PC-9 (cell line): ENCODE measurements at regions of chr1 and their contacts with region 1.

Region 1: DNA sequence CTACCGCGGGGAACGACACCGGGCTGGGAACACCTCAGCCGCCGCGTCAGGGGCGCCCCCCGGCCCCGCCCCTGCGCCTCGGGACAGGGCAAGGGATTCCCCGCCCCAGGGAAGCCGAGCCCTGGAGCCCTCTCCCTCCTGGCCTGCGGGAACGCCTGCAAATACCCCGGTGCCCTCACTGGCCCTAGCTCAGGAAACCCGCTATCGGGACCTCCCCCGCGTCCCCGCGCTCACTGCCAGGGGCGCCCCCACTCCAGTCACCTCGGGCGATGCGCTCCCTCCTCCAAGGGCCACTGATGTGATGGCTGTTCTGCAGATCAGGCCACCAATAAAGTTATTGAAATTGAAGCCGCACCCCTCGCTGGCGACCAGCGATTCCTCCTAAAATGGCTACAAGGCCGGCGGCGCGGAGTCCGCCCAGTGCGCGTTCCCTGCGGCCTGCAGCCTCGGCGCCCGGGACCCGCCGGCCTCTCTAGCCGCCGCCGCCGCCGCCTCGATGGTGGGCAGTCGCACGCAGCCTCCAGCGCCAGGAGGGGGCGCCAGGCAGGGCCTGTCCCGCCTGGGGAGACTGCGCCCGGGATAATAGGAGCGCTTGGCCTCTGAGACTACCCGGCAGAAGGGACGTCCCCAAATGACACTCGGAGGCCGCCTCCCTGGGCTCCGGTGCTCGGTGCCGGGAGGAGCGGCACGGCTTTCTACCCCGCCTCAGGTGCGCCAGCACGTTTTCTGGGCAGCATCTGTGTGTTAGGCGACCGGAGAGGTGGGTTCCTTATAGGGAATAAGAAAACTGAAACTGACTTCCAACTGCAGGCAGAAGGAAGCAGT is at the start of gene PRKAB2:
- DNase-seq: peak; percentile 81 to 96
- H3K4me3 ChIP-seq: peak within 1 kb of the TSS; percentile 87
- H3K27ac ChIP-seq: peak within 1 kb of the TSS; percentile 73
- H3K4me1 ChIP-seq: peaks cover 42% of the 10 kb centered on the region
- H3K27me3 ChIP-seq: no peaks in the 10 kb centered on the region
- CTCF ChIP-seq: peak; percentile 79
- total RNA-seq, gene PRKAB2: 5.8 and 8.1 TPM in 2 replicates

Region 2: GRCh38 chr1:147084273-147085096 is 87.9 kb before region 1 on chr1:
- CTCF ChIA-PET with region 1: no interaction called
- POLR2A ChIA-PET with region 1: interaction called, 12 read pairs
- intact Hi-C with region 1: loop called (anchors 2 kb)
- DNase-seq: peak; percentile 68 to 97
- H3K4me3 ChIP-seq: peak overlapping the region; percentile 61
- H3K27ac ChIP-seq: peak overlapping the region; percentile 93
- H3K4me1 ChIP-seq: 0 out of 2 replicates have a peak, but pooled peaks cover 6% of the 10 kb centered on the region
- H3K27me3 ChIP-seq: 0 out of 2 replicates have a peak, but pooled peaks cover 4% of the 10 kb centered on the region
- CTCF ChIP-seq: no peak

Region 3: DNA sequence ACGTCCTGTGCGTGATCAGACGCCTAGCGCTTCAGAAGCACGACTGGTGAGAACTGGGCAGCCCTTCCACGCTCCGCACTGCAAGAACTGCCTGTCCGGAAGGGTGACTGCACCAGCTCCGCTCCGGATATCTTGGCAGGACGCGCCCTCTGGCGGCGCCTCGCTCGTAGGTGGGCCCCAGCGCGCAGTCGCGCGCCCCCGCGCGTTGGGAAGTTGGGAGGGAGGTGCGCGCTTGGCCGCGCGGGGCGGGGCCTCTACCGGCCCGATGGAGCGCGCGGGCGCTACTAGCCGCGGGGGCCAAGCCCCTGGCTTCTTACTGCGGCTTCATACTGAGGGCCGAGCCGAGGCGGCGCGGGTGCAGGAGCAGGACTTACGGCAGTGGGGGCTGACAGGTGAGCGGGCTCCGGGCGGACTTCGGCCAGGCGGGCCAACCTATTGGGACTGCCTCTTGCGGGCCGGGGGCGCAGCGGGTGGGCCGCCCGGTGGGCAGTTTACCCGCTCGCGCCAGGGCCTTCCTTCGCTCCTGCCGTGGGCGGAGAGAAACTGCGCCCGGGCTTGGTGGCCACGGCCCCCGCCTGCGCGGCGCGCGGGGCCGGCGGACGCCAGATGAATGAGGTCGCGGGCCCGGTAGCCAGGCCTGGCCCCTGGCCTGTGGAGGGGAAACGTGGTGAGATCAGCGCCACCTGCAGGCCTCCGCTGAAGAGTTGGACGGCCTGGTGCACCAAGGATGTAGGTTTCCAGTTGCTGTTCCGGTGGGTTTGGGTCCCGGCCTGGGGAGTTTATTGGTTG is 70.3 kb after region 1 on chr1 and contains the start of gene CHD1L:
- CTCF ChIA-PET with region 1: no interaction called
- POLR2A ChIA-PET with region 1: interaction called, 6 read pairs
- intact Hi-C with region 1: loop called (anchors 2 kb)
- DNase-seq: peak; percentile 86 to 95
- H3K4me3 ChIP-seq: peak within 1 kb of the TSS; percentile 74
- H3K27ac ChIP-seq: peak within 1 kb of the TSS; percentile 54
- H3K4me1 ChIP-seq: peaks cover 40% of the 10 kb centered on the region
- H3K27me3 ChIP-seq: no peaks in the 10 kb centered on the region
- CTCF ChIP-seq: peak; percentile 73
- total RNA-seq, gene CHD1L: 31.7 and 31.8 TPM in 2 replicates